Body of pancreas (tissue), 4 donors: ENCODE measurements at regions of chr20 and their contacts with region 1.

Region 1: GRCh38 chr20:41177636-41178035 is 40.3 kb downstream of the PLCG1 start:
- DNase-seq: no peak
- ATAC-seq: no peak
- H3K4me3 ChIP-seq: no peak overlapping the region
- H3K27ac ChIP-seq: no peak overlapping the region
- H3K4me1 ChIP-seq: peaks cover 4% of the 10 kb centered on the region
- H3K27me3 ChIP-seq: no peaks in the 10 kb centered on the region
- CTCF ChIP-seq: no peak
- POLR2A ChIP-seq: no peak

Region 2: GRCh38 chr20:41334443-41335421 is 157.1 kb after region 1 on chr20:
- intact Hi-C with region 1: loop called (anchors 2 kb)
- DNase-seq: peak in 1 of 4 donors; percentile 37
- ATAC-seq: peak; percentile 49
- H3K4me3 ChIP-seq: no peak overlapping the region
- H3K27ac ChIP-seq: peak overlapping the region; percentile 11 to 71 (median 54)
- H3K4me1 ChIP-seq: peaks cover 17% of the 10 kb centered on the region
- H3K27me3 ChIP-seq: no peaks in the 10 kb centered on the region
- CTCF ChIP-seq: no peak
- POLR2A ChIP-seq: no peak